Activated B cell treated with CpG ODN at 0.5 μM for 24 hours (primary cell): ENCODE measurements at regions of chr18 and their contacts with region 1.

Region 1: GRCh38 chr18:3593904-3594661 is 144.1 kb downstream of the TGIF1 start:
- DNase-seq: peak; percentile 76
- ATAC-seq: peak; percentile 78
- H3K4me3 Mint-ChIP-seq: peak overlapping the region; percentile 90
- H3K27ac Mint-ChIP-seq: peak overlapping the region; percentile 94
- H3K4me1 Mint-ChIP-seq: peaks cover 65% of the 10 kb centered on the region
- H3K27me3 Mint-ChIP-seq: no peaks in the 10 kb centered on the region
- CTCF ChIP-seq: no peak

Region 2: DNA sequence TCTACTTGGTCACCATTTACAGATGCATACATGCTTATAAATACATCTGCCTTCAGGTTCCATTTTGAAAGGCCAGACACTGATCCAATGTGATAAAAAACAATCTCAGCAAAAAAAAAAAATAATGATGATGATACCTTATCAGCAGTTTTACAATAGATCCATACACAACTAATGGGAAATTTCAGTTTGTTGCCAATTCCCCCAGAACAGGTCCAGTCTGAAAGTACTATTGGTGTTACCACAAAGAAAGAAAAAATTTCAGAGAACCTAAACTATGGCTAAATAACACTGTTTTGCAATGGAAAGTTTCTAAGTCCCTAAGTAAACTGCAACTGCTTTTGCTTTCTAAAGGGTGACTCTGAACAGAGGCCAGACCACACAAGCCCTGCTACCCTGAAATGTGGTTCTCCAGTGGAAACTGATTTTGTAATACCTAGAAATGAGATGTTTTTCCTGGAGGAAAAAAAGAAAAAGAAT is 635.2 kb before region 1 on chr18:
- CTCF ChIA-PET with region 1: no interaction called
- POLR2A ChIA-PET with region 1: interaction called, 3 read pairs
- intact Hi-C with region 1: loop called (anchors 5 kb)
- DNase-seq: no peak
- ATAC-seq: no peak
- H3K4me3 Mint-ChIP-seq: peak overlapping the region; percentile 32
- H3K27ac Mint-ChIP-seq: peak overlapping the region; percentile 97
- H3K4me1 Mint-ChIP-seq: peaks cover 82% of the 10 kb centered on the region
- H3K27me3 Mint-ChIP-seq: no peaks in the 10 kb centered on the region
- CTCF ChIP-seq: no peak

Region 3: DNA sequence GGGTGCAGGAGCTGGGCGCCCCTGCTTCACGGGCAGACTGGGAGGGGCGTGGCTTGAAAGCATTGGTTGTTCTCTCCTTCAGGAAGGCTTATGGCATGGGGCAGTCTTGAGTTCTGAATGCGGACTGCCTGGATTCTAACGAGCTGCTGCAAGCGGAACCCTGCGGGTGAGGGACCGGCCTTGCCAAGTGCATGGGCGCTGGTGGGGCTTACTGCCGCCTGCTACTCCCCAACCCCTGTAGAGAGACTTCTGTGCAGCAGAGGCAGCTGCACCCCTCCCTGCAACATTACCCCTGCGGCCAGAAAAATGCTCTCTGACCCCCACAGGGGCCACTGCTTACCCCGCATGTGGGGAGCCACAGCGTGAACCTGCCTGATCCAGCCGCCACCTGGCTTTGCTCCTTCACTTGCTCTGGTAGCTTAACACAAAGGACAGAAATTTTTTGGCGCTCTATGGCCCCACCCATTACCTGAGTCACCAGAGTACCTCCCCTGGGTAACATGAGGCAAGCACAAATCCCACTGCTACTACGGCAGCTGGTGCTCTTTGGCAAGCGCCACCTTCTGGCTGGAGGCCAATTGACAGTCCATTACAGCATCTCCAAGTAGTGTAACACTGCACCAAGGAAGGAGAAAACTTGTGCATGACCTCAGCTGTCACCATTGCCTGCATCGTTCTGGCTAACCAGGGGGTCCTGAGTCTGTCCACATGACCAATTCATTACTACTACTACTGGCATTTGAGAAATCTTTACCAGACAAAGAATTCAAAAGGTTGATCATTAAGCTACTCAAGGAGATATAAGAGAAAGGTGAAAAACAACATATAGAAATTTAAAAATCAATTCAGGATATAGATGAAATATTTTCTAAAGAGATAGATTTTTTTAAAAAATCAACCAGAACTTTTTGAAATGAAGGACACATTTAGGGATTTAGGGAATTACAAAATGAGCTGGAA is 296.8 kb before region 1 on chr18:
- CTCF ChIA-PET with region 1: interaction called, 9 read pairs
- POLR2A ChIA-PET with region 1: interaction called, 18 read pairs
- intact Hi-C with region 1: loop called (anchors 1 kb)
- DNase-seq: peak; percentile 82
- ATAC-seq: peak; percentile 99
- H3K4me3 Mint-ChIP-seq: peak overlapping the region; percentile 95
- H3K27ac Mint-ChIP-seq: peak overlapping the region; percentile 83
- H3K4me1 Mint-ChIP-seq: peaks cover 11% of the 10 kb centered on the region
- H3K27me3 Mint-ChIP-seq: peaks cover 6% of the 10 kb centered on the region
- CTCF ChIP-seq: no peak

Region 4: GRCh38 chr18:3391704-3392466 is 202.2 kb before region 1 on chr18:
- CTCF ChIA-PET with region 1: no interaction called
- POLR2A ChIA-PET with region 1: no interaction called
- intact Hi-C with region 1: no loop called
- DNase-seq: no peak
- ATAC-seq: no peak
- H3K4me3 Mint-ChIP-seq: no peak overlapping the region
- H3K27ac Mint-ChIP-seq: no peak overlapping the region
- H3K4me1 Mint-ChIP-seq: no peaks in the 10 kb centered on the region
- H3K27me3 Mint-ChIP-seq: no peaks in the 10 kb centered on the region
- CTCF ChIP-seq: no peak

Region 5: DNA sequence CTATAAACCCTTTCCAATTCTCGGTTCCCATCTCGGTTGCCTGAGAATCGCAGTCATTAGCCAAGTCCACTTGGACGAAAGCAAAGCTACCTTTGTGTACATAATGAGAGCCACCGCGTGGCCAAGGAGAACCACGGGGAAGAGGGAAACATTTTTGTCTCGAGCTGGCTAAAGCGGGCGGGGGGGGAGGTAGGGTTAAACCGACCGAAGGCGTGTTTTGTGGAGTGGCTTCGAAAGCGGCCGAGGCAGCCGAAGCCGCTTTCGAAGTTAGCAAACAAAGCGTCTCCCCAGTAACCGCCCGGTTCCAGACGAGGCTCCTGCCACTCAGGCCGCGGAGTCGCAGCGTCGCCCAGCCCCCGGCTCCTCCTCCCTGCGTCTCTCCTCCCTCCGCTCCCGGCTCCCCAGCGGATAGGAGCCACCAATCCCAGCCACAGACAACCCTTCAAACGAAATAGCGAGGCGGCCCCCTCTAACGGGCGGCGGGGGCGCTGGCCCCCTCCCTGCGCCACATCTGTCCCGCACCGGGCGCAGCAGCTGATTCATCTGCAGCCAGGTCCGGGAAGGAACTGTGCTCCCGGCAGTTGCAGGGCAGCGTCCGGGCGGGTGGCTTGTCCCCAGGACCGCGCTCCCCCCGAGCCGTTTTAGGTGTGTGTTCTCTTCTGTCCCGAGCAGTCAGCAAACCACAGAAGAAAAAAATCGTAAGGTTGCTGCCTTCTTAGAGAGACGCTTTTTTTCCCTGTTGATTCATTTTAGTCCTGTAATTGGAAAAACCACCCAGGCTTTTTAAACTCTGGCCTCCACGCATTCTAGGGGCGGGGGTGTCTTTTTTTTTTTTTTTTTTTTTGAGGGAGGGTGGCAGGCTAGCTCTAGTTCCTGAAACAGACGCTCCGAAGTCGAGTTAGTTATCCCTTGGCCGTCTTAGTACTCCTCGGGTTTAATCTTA is 145.9 kb before region 1 on chr18:
- CTCF ChIA-PET with region 1: interaction called, 81 read pairs
- POLR2A ChIA-PET with region 1: interaction called, 432 read pairs
- intact Hi-C with region 1: loop called (anchors 1 kb)
- DNase-seq: peak; percentile 77
- ATAC-seq: peak; percentile 45
- H3K4me3 Mint-ChIP-seq: peak overlapping the region; percentile 96
- H3K27ac Mint-ChIP-seq: peak overlapping the region; percentile 100
- H3K4me1 Mint-ChIP-seq: peaks cover 34% of the 10 kb centered on the region
- H3K27me3 Mint-ChIP-seq: no peaks in the 10 kb centered on the region
- CTCF ChIP-seq: no peak

Region 6: DNA sequence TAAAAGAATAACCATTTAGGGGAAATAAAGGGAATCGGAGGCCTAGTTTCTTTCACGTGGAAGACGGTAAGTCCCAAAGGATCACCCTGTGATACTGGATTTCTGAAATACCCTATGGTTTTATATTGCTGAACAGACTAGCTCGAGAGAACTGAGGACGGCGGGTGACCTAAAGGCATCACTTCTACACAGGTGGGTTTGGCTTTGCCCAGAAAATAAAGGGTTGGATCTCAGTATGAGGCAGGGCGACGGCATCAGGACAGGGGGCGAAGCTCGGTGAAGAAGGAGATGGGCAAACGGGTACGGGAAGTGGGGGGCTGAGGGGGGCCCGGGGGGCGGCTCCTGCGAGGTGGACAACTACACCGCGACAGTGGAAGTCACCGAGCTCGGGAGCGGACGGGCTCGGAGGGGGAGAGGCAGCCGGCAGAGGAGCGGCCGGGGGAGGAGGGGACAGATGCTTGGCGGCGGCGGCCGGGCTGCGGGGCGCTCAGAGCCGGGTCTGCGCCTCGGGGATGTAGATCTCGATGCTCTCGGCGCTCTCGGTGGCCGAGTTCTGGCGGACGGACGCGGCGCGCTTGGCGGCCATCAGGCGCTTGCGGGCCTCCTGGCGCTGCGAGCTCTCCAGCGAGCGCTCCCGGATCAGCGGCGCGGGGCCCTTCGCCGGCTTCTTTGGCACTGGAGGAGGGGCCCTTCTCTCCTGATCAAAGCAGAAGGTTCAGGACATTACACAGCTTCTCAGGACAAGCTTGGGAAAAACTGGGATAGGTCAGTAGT is 95.2 kb before region 1 on chr18:
- CTCF ChIA-PET with region 1: interaction called, 3 read pairs
- POLR2A ChIA-PET with region 1: interaction called, 38 read pairs
- intact Hi-C with region 1: loop called (anchors 2 kb)
- DNase-seq: peak; percentile 33
- ATAC-seq: peak; percentile 70
- H3K4me3 Mint-ChIP-seq: peak overlapping the region; percentile 80
- H3K27ac Mint-ChIP-seq: peak overlapping the region; percentile 25
- H3K4me1 Mint-ChIP-seq: peaks cover 32% of the 10 kb centered on the region
- H3K27me3 Mint-ChIP-seq: peaks cover 14% of the 10 kb centered on the region
- CTCF ChIP-seq: no peak

Region 7: GRCh38 chr18:3665780-3666525 is 71.9 kb after region 1 on chr18:
- CTCF ChIA-PET with region 1: interaction called, 75 read pairs
- POLR2A ChIA-PET with region 1: interaction called, 52 read pairs
- intact Hi-C with region 1: loop called (anchors 1 kb)
- DNase-seq: peak; percentile 51
- ATAC-seq: peak; percentile 84
- H3K4me3 Mint-ChIP-seq: no peak overlapping the region
- H3K27ac Mint-ChIP-seq: no peak overlapping the region
- H3K4me1 Mint-ChIP-seq: peaks cover 21% of the 10 kb centered on the region
- H3K27me3 Mint-ChIP-seq: no peaks in the 10 kb centered on the region
- CTCF ChIP-seq: peak; percentile 83